Ascending aorta (tissue), 2 donors: ENCODE measurements at regions of chr9 and their contacts with region 1.

Region 1: GRCh38 chr9:131349881-131350563 is 43.9 kb upstream of the PRRC2B start:
- DNase-seq: peak; percentile 32 to 92
- H3K4me3 ChIP-seq: peak overlapping the region in 1 of 2 donors; percentile 45
- H3K27ac ChIP-seq: no peak overlapping the region
- H3K4me1 ChIP-seq: no peaks in the 10 kb centered on the region
- H3K27me3 ChIP-seq: no peaks in the 10 kb centered on the region
- CTCF ChIP-seq: peak; percentile 82 to 89 (median 87)

Region 2: DNA sequence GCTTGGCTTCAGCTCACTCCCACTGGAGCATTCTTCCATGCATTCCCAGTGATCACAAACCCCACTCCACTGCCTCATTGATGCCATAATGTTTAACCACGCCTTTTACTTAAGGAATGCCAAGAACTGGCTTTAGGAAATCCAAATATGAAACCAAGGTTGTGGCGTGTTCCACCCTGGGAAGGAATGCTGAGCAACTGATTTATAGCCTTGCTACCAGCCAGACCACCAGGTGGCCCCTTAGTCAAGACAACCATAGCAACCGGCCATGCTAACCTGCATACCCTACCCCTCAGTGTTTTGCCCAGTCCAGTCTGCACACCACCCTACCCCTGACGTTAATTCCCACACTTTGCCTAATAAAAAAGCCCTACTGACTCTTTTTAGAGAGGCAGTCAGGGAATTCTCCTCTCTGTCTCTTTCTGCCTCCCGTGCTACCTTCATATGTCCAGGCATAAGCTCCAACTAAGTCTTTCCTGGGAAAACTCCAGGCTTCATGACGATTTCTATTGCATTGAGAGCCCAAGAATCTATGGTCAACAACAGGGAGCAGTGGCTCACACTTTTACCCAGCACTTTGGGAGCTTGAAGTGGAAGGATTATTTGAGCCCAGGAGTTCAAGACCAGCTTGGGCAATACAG is 16.9 kb after region 1 on chr9:
- intact Hi-C with region 1: no loop called
- DNase-seq: no peak
- H3K4me3 ChIP-seq: no peak overlapping the region
- H3K27ac ChIP-seq: no peak overlapping the region
- H3K4me1 ChIP-seq: no peaks in the 10 kb centered on the region
- H3K27me3 ChIP-seq: no peaks in the 10 kb centered on the region
- CTCF ChIP-seq: peak; percentile 13 to 49 (median 19)

Region 3: GRCh38 chr9:131478421-131478868 is 128.4 kb after region 1 on chr9:
- intact Hi-C with region 1: loop called (anchors 5 kb)
- DNase-seq: no peak
- H3K4me3 ChIP-seq: no peak overlapping the region
- H3K27ac ChIP-seq: no peak overlapping the region
- H3K4me1 ChIP-seq: no peaks in the 10 kb centered on the region
- H3K27me3 ChIP-seq: no peaks in the 10 kb centered on the region
- CTCF ChIP-seq: peak; percentile 34 to 69 (median 38)